IMR-90 (cell line): ENCODE measurements at regions of chr4 and their contacts with region 1.

Region 1: DNA sequence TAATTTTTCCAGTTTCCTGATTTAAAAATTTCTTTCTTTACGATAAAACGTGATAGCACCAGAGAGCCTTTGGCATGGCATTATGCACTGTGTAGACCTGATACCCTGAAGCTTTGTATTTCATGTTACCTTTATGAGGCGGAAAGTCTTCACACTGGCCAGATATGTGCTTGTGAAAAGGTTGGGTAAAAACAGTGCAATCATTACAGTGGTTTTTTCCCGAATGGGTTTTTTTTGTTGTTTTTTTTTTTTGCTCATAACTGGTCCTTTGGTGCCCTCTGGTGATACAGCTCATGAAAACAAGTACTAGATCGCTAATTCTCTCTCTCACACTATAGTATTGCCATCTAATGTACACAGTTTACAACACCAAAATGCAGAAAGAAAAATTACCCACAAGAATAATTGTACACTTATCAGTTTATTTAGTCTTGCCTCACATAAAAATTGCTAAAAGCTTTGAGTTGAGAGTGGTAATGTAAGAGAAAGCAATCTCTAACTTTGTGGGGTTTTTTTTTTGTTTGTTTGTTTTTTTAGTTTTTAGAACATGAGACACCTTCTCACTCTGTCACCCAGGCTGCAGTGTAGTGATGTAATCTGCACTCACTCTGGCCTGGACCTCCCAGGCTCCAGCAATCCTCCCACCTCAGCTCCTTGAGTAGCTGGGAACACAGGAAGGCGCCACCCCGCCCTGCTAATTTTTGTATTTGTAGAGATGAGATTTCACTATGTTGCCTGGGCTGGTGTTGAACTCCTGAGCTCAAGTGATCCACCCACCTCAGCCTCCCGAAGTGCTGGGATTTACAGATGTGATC is 21.3 kb downstream of the SPCS3 start:
- DNase-seq: peak; percentile 66
- ATAC-seq: peak; percentile 62
- H3K4me3 ChIP-seq: no peak overlapping the region
- H3K27ac ChIP-seq: no peak overlapping the region
- H3K4me1 ChIP-seq: peaks cover 7% of the 10 kb centered on the region
- H3K27me3 ChIP-seq: no peaks in the 10 kb centered on the region
- CTCF ChIP-seq: peak; percentile 76
- POLR2A ChIP-seq: no peak
- RAD21 ChIP-seq: peak; percentile 89

Region 2: DNA sequence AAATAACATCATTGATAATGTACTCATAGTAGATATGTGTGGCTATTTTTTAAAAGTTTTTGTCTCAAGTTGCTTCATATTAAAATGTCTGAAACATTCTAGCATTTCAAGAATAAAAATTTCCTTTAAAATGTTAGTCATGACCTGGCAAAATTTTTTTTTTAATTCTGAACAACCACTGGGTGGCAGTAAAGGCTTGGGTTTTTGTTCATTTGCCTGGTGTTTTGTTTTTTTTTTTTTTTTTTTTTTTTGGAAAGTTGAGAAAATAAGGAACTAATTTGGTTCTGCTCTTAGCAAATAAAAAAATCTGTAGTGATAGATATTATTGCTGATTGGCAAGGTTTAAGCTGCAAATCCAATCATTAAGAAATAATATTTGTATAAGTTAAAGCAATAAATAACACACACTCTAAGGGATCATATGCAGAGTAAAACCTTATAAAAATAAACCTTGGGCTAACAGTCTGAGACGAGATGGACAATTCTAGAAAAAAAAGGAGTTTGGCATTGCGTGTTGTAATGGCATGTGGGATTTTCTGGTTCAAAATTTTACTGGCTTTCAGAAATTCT is 1976.0 kb before region 1 on chr4:
- CTCF ChIA-PET with region 1: no interaction called
- POLR2A ChIA-PET with region 1: no interaction called
- dilution Hi-C with region 1: no loop called
- in situ Hi-C with region 1: loop called (anchors 25 kb)
- intact Hi-C with region 1: loop called (anchors 10 kb)
- DNase-seq: peak; percentile 38
- ATAC-seq: no peak
- H3K4me3 ChIP-seq: no peak overlapping the region
- H3K27ac ChIP-seq: no peak overlapping the region
- H3K4me1 ChIP-seq: no peaks in the 10 kb centered on the region
- H3K27me3 ChIP-seq: no peaks in the 10 kb centered on the region
- CTCF ChIP-seq: peak; percentile 62
- POLR2A ChIP-seq: no peak
- RAD21 ChIP-seq: peak; percentile 65

Region 3: DNA sequence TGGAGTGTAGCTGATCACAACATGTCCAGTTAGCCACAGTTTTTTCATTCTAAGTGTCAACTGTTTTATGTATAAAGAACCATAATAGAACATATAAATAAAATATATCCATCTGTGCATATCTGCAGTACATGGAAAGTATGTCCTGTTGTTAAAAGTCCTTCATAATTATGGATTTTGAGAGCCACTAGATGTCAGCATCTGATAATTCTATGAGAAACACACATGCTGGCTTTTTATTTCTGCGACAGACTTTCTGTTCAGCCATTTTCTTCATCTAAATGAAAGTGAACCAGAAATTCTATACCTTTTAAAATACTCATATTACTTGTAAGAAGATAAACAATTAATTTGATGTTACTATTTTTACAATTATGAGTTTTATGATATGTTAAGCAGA is 780.5 kb before region 1 on chr4:
- CTCF ChIA-PET with region 1: no interaction called
- POLR2A ChIA-PET with region 1: no interaction called
- dilution Hi-C with region 1: no loop called
- in situ Hi-C with region 1: loop called (anchors 25 kb)
- intact Hi-C with region 1: no loop called
- DNase-seq: peak; percentile 5
- ATAC-seq: no peak; the same call in 1 of the 2 replicates
- H3K4me3 ChIP-seq: no peak overlapping the region
- H3K27ac ChIP-seq: no peak overlapping the region
- H3K4me1 ChIP-seq: no peaks in the 10 kb centered on the region
- H3K27me3 ChIP-seq: no peaks in the 10 kb centered on the region
- CTCF ChIP-seq: 0 out of 2 replicates have a peak, but pooled peaks have one; percentile 25
- POLR2A ChIP-seq: no peak
- RAD21 ChIP-seq: peak; percentile 24; the same call in 1 of the 2 replicates

Region 4: GRCh38 chr4:176034499-176034898 is 306.6 kb before region 1 on chr4:
- CTCF ChIA-PET with region 1: interaction called, 7 read pairs
- POLR2A ChIA-PET with region 1: no interaction called
- dilution Hi-C with region 1: no loop called
- in situ Hi-C with region 1: loop called (anchors 5 kb)
- intact Hi-C with region 1: loop called (anchors 1 kb)
- DNase-seq: peak; percentile 55
- ATAC-seq: peak; percentile 65; the same call in 1 of the 2 replicates
- H3K4me3 ChIP-seq: no peak overlapping the region
- H3K27ac ChIP-seq: no peak overlapping the region
- H3K4me1 ChIP-seq: no peaks in the 10 kb centered on the region
- H3K27me3 ChIP-seq: no peaks in the 10 kb centered on the region
- CTCF ChIP-seq: peak; percentile 66
- POLR2A ChIP-seq: no peak
- RAD21 ChIP-seq: peak; percentile 76

Region 5: DNA sequence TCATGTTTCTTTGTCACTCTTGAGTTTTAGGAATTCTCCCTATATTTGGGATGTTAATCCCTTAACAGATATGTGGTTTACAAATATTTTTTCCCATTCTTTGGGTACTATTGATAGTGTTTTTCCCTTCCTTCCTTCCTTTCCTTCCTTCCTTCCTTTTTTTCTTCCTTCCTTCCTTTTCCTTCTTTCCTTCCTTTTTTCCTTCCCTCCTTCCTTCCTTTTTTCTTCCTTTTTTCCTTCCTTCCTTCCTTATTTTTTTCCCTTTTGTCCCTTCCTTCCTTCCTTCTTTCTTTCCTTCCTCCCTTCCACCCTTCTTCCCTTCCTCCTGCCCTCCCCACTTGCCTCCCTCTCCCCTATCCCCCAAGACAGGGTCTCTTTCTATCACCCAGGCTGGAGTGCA is 233.4 kb before region 1 on chr4:
- CTCF ChIA-PET with region 1: no interaction called
- POLR2A ChIA-PET with region 1: no interaction called
- dilution Hi-C with region 1: no loop called
- in situ Hi-C with region 1: no loop called
- intact Hi-C with region 1: no loop called
- DNase-seq: no peak
- ATAC-seq: no peak
- H3K4me3 ChIP-seq: no peak overlapping the region
- H3K27ac ChIP-seq: no peak overlapping the region
- H3K4me1 ChIP-seq: no peaks in the 10 kb centered on the region
- H3K27me3 ChIP-seq: no peaks in the 10 kb centered on the region
- CTCF ChIP-seq: no peak
- POLR2A ChIP-seq: no peak
- RAD21 ChIP-seq: no peak

Region 6: GRCh38 chr4:176150356-176150682 is 190.8 kb before region 1 on chr4:
- CTCF ChIA-PET with region 1: interaction called, 7 read pairs
- POLR2A ChIA-PET with region 1: no interaction called
- dilution Hi-C with region 1: no loop called
- in situ Hi-C with region 1: loop called (anchors 10 kb)
- intact Hi-C with region 1: loop called (anchors 1 kb)
- DNase-seq: peak; percentile 46
- ATAC-seq: peak; percentile 66
- H3K4me3 ChIP-seq: no peak overlapping the region
- H3K27ac ChIP-seq: no peak overlapping the region
- H3K4me1 ChIP-seq: no peaks in the 10 kb centered on the region
- H3K27me3 ChIP-seq: no peaks in the 10 kb centered on the region
- CTCF ChIP-seq: peak; percentile 46
- POLR2A ChIP-seq: no peak
- RAD21 ChIP-seq: peak; percentile 58

Region 7: DNA sequence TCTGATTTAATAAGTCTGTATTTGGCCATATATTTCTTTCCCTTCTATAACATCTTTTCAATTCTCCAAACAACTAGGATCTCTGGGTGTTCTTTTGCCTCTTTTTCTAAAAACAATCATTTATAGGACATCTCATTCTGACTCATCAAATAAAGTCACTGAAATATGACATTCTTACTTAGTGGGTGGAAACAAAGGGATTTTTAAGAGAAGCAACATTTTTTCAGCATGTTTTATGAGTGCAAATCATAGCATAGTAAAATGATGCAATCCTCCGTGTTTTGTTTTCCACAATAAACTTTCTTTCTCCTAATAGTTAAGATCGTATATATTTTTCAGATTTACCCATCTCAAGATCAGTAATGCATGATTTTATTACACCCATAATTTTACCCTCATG is 158.4 kb after region 1 on chr4:
- CTCF ChIA-PET with region 1: no interaction called
- POLR2A ChIA-PET with region 1: no interaction called
- dilution Hi-C with region 1: no loop called
- in situ Hi-C with region 1: no loop called
- intact Hi-C with region 1: no loop called
- DNase-seq: peak; percentile 77
- ATAC-seq: peak; percentile 43; the same call in 1 of the 2 replicates
- H3K4me3 ChIP-seq: no peak overlapping the region
- H3K27ac ChIP-seq: peak overlapping the region; percentile 35; the same call in 1 of the 2 replicates
- H3K4me1 ChIP-seq: 0 out of 2 replicates have a peak, but pooled peaks cover 3% of the 10 kb centered on the region
- H3K27me3 ChIP-seq: no peaks in the 10 kb centered on the region
- CTCF ChIP-seq: no peak
- POLR2A ChIP-seq: no peak
- RAD21 ChIP-seq: no peak

Region 8: GRCh38 chr4:176526704-176527103 is 185.6 kb after region 1 on chr4:
- CTCF ChIA-PET with region 1: no interaction called
- POLR2A ChIA-PET with region 1: no interaction called
- dilution Hi-C with region 1: no loop called
- in situ Hi-C with region 1: no loop called
- intact Hi-C with region 1: no loop called
- DNase-seq: no peak
- ATAC-seq: no peak
- H3K4me3 ChIP-seq: no peak overlapping the region
- H3K27ac ChIP-seq: no peak overlapping the region
- H3K4me1 ChIP-seq: no peaks in the 10 kb centered on the region
- H3K27me3 ChIP-seq: no peaks in the 10 kb centered on the region
- CTCF ChIP-seq: no peak
- POLR2A ChIP-seq: no peak
- RAD21 ChIP-seq: no peak